HCT116 (cell line): ENCODE measurements at regions of chr1 and their contacts with region 1.

Region 1: GRCh38 chr1:110645821-110646735 is 28.7 kb downstream of the KCNA3 start:
- DNase-seq: no peak
- ATAC-seq: no peak
- H3K4me3 ChIP-seq: no peak overlapping the region
- H3K27ac ChIP-seq: no peak overlapping the region
- H3K4me1 ChIP-seq: no peaks in the 10 kb centered on the region
- H3K27me3 ChIP-seq: peaks cover 91% of the 10 kb centered on the region
- CTCF ChIP-seq: no peak
- POLR2A ChIP-seq: no peak
- RAD21 ChIP-seq: no peak

Region 2: GRCh38 chr1:110663241-110663640 is 17.2 kb after region 1 on chr1:
- CTCF ChIA-PET with region 1: no interaction called
- POLR2A ChIA-PET with region 1: no interaction called
- RAD21 ChIA-PET with region 1: no interaction called
- intact Hi-C with region 1: loop called (anchors 2 kb)
- DNase-seq: no peak
- ATAC-seq: no peak
- H3K4me3 ChIP-seq: no peak overlapping the region
- H3K27ac ChIP-seq: no peak overlapping the region
- H3K4me1 ChIP-seq: no peaks in the 10 kb centered on the region
- H3K27me3 ChIP-seq: peaks cover 60% of the 10 kb centered on the region
- CTCF ChIP-seq: no peak
- POLR2A ChIP-seq: no peak
- RAD21 ChIP-seq: no peak

Region 3: GRCh38 chr1:110686188-110686587 is 40.1 kb after region 1 on chr1:
- CTCF ChIA-PET with region 1: no interaction called
- POLR2A ChIA-PET with region 1: no interaction called
- RAD21 ChIA-PET with region 1: no interaction called
- intact Hi-C with region 1: loop called (anchors 5 kb)
- DNase-seq: no peak
- ATAC-seq: peak; percentile 69
- H3K4me3 ChIP-seq: no peak overlapping the region
- H3K27ac ChIP-seq: no peak overlapping the region
- H3K4me1 ChIP-seq: no peaks in the 10 kb centered on the region
- H3K27me3 ChIP-seq: peaks cover 74% of the 10 kb centered on the region
- CTCF ChIP-seq: peak in 2 of 3 experiments; percentile 20 to 33; a peak in 3 of 6 replicates
- POLR2A ChIP-seq: no peak
- RAD21 ChIP-seq: no peak

Region 4: GRCh38 chr1:110714374-110714995 is 68.4 kb after region 1 on chr1:
- CTCF ChIA-PET with region 1: no interaction called
- POLR2A ChIA-PET with region 1: no interaction called
- RAD21 ChIA-PET with region 1: no interaction called
- intact Hi-C with region 1: loop called (anchors 5 kb)
- DNase-seq: no peak
- ATAC-seq: no peak
- H3K4me3 ChIP-seq: no peak overlapping the region
- H3K27ac ChIP-seq: no peak overlapping the region
- H3K4me1 ChIP-seq: no peaks in the 10 kb centered on the region
- H3K27me3 ChIP-seq: peaks cover 75% of the 10 kb centered on the region
- CTCF ChIP-seq: no peak
- POLR2A ChIP-seq: no peak
- RAD21 ChIP-seq: no peak

Region 5: GRCh38 chr1:110816930-110817329 is 170.9 kb after region 1 on chr1:
- CTCF ChIA-PET with region 1: no interaction called
- POLR2A ChIA-PET with region 1: no interaction called
- RAD21 ChIA-PET with region 1: no interaction called
- intact Hi-C with region 1: no loop called
- DNase-seq: no peak
- ATAC-seq: no peak
- H3K4me3 ChIP-seq: no peak overlapping the region
- H3K27ac ChIP-seq: no peak overlapping the region
- H3K4me1 ChIP-seq: no peaks in the 10 kb centered on the region
- H3K27me3 ChIP-seq: peaks cover 41% of the 10 kb centered on the region
- CTCF ChIP-seq: no peak
- POLR2A ChIP-seq: no peak
- RAD21 ChIP-seq: no peak